Psoas muscle (tissue), 8 donors: ENCODE measurements at regions of chr15 and their contacts with region 1.

Region 1: DNA sequence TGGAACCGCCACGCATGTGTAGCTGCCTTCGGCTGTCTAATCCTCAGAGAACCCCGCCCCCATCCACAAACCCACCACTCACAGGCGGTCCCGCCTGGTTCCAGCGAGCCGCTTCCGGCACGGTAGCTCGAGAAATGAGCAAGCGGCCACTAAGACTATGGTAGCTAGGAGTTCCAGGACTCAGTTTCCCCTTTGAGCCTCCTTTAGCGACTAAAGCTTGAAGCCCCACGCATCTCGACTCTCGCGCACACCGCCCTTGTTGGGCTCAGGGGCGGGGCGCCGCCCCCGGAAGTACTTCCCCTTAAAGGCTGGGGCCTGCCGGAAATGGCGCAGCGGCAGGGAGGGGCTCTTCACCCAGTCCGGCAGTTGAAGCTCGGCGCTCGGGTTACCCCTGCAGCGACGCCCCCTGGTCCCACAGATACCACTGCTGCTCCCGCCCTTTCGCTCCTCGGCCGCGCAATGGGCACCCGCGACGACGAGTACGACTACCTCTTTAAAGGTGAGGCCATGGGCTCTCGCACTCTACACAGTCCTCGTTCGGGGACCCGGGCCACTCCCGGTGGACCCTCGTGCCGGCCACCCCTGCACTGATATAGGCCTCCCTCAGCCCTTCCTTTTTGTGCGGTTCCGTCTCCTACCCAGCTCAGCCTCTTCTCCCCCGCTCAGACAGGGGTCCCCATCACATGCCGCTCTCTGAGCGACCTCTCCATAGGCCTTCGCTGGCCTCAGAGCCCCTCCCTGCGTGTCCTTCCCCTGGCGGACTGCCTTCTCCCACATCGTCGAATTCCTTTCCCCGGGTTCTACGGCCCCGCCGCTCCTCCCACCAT is at the start of gene RAB11A:
- DNase-seq: peak; percentile 96 to 99
- ATAC-seq: peak; percentile 98 to 100 (median 99)
- H3K4me3 ChIP-seq: peak within 1 kb of the TSS; percentile 98
- H3K27ac ChIP-seq: peak within 1 kb of the TSS; percentile 95
- H3K4me1 ChIP-seq: peaks cover 10% of the 10 kb centered on the region
- H3K27me3 ChIP-seq: no peaks in the 10 kb centered on the region
- CTCF ChIP-seq: peak; percentile 36
- total RNA-seq, gene RAB11A: 89.5 to 152 (median 105) TPM

Region 2: DNA sequence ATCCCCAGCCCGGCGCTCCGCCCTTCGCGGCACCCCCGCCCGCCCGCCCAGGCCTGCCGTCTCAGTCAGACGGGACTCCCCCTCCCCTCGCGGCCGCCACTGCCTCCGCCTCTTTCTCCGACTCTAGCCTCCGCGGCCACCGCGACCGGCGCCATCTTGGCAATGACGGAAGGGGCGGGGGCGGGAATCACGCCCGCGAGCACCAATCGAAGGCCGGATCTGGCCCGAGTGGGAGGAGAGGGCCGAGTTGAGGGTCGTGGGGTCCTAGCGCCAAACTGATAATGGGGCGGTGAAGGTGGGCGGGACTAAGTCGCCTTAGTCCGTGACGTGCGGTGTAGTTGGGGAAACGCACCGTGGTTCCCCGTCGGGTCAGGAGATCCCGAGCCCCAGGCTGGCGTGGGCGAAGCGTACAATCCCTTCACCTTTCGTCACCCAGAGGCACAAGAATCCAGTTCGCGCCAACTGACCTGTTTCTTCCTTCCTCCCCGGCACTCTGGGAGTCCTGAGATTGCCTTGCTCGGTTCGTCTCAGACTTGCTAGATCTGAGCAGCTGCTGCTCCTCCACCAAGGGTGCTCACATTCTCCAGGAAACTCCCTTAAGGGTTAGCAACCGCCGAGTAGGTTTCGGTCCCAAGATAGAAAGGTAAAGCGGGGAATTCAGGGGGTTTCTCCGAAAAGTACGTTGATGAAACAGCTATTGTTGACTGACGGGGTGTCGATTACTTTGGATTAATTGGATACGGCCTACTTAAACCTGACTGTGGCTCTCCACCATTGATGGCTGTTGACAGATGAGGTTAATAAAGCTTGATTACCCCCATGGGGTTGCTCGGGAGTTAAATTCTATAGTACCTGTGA is 77.0 kb before region 1 on chr15 and contains the start of gene DENND4A:
- intact Hi-C with region 1: loop called (anchors 2 kb)
- DNase-seq: peak; percentile 98 to 99
- ATAC-seq: peak; percentile 94 to 97 (median 96)
- H3K4me3 ChIP-seq: peak within 1 kb of the TSS; percentile 90
- H3K27ac ChIP-seq: peak within 1 kb of the TSS; percentile 98
- H3K4me1 ChIP-seq: peaks cover 16% of the 10 kb centered on the region
- H3K27me3 ChIP-seq: no peaks in the 10 kb centered on the region
- CTCF ChIP-seq: no peak
- total RNA-seq, gene DENND4A: 15.4 to 46.7 (median 23.4) TPM